ENCODE measurements at regions of chr11 and their contacts with region 1.

Region 1: GRCh38 chr11:86676548-86677154 is 4.2 kb upstream of the ME3 start:
- DNase-seq: peak; percentile 55 to 64 (median 60)
- ATAC-seq: peak; percentile 89
- H3K4me3 ChIP-seq: no peak overlapping the region
- H3K27ac ChIP-seq: no peak overlapping the region
- H3K4me1 ChIP-seq: peaks cover 0 to 8% of the 10 kb centered on the region in 2 experiments; a peak in 1 of 5 replicates
- H3K27me3 ChIP-seq: peaks cover 11 to 27% of the 10 kb centered on the region in 2 experiments; a peak in 4 of 5 replicates
- CTCF ChIP-seq: peak; percentile 65 to 79 (median 73)
- EP300 ChIP-seq: no peak
- POLR2A ChIP-seq: no peak
- RAD21 ChIP-seq: peak; percentile 77 to 80

Region 2: GRCh38 chr11:86749376-86749775 is 72.7 kb after region 1 on chr11:
- CTCF ChIA-PET with region 1: interaction called, 3 read pairs
- POLR2A ChIA-PET with region 1: no interaction called
- in situ Hi-C with region 1: no loop called
- intact Hi-C with region 1: loop called (anchors 2 kb)
- DNase-seq: peak in 2 of 4 experiments; percentile 26 to 36
- ATAC-seq: peak; percentile 78
- H3K4me3 ChIP-seq: no peak overlapping the region
- H3K27ac ChIP-seq: no peak overlapping the region
- H3K4me1 ChIP-seq: no peaks in the 10 kb centered on the region
- H3K27me3 ChIP-seq: peaks cover 0 to 9% of the 10 kb centered on the region in 2 experiments; a peak in 2 of 5 replicates
- CTCF ChIP-seq: peak; percentile 66 to 98 (median 97)
- EP300 ChIP-seq: no peak
- POLR2A ChIP-seq: no peak
- RAD21 ChIP-seq: peak; percentile 79 to 88

Region 3: GRCh38 chr11:86802601-86803051 is 126.0 kb after region 1 on chr11:
- CTCF ChIA-PET with region 1: no interaction called
- POLR2A ChIA-PET with region 1: no interaction called
- in situ Hi-C with region 1: no loop called
- intact Hi-C with region 1: loop called (anchors 2 kb)
- DNase-seq: peak in 3 of 4 experiments; percentile 14 to 43 (median 25)
- ATAC-seq: peak; percentile 87
- H3K4me3 ChIP-seq: no peak overlapping the region
- H3K27ac ChIP-seq: no peak overlapping the region
- H3K4me1 ChIP-seq: peaks cover 0 to 13% of the 10 kb centered on the region in 2 experiments; a peak in 2 of 5 replicates
- H3K27me3 ChIP-seq: peaks cover 14 to 26% of the 10 kb centered on the region in 2 experiments
- CTCF ChIP-seq: peak; percentile 36 to 45 (median 38); a peak in 3 of 6 replicates
- EP300 ChIP-seq: no peak
- POLR2A ChIP-seq: no peak
- RAD21 ChIP-seq: peak; percentile 35 to 59; a peak in 3 of 4 replicates

Region 4: DNA sequence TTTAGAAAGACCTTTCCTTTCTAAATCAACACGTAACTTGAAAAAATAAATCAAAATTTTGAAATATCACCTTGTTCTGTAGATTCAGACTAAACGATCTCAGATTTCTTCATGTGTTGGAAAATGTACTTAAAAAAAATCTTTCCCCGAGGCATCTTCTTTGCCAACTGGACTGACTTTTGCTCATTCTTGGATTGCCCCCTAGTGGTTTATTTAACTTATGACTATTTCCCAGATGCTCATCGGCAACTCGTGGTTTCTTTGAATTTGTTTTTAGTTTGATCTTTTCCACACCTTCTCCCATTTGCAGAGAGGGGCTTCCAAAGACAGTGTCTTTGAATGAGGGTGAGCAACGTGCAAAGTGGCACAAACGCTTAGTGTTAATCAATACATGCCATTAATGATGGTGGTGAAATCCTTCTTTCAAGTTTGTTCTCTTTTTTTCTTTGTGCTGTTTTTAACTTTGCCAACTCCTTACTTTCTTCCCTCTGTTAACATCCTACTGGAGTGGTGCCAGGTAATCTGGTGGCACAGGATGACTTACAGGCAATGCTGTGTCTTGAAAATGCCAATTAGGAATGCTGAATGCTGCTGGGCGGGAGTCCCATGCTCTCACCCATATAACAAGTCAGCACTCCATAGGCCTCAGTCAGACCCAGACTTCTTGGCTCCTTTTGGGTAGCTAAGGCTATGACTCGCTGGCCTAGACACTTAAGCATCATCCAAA is 142.0 kb after region 1 on chr11:
- CTCF ChIA-PET with region 1: no interaction called
- POLR2A ChIA-PET with region 1: no interaction called
- in situ Hi-C with region 1: no loop called
- intact Hi-C with region 1: loop called (anchors 2 kb)
- DNase-seq: peak; percentile 49 to 64 (median 55)
- ATAC-seq: peak; percentile 77
- H3K4me3 ChIP-seq: no peak overlapping the region
- H3K27ac ChIP-seq: no peak overlapping the region
- H3K4me1 ChIP-seq: no peaks in the 10 kb centered on the region
- H3K27me3 ChIP-seq: peaks cover 0 to 14% of the 10 kb centered on the region in 2 experiments; a peak in 2 of 5 replicates
- CTCF ChIP-seq: peak; percentile 61 to 88 (median 67)
- EP300 ChIP-seq: no peak
- POLR2A ChIP-seq: no peak
- RAD21 ChIP-seq: peak; percentile 93 to 95

Region 5: GRCh38 chr11:87398931-87399330 is 722.3 kb after region 1 on chr11:
- CTCF ChIA-PET with region 1: no interaction called
- POLR2A ChIA-PET with region 1: no interaction called
- in situ Hi-C with region 1: no loop called
- intact Hi-C with region 1: no loop called
- DNase-seq: no peak
- ATAC-seq: no peak
- H3K4me3 ChIP-seq: no peak overlapping the region
- H3K27ac ChIP-seq: no peak overlapping the region
- H3K4me1 ChIP-seq: no peaks in the 10 kb centered on the region
- H3K27me3 ChIP-seq: no peaks in the 10 kb centered on the region
- CTCF ChIP-seq: no peak
- EP300 ChIP-seq: no peak
- POLR2A ChIP-seq: no peak
- RAD21 ChIP-seq: no peak